ENCODE measurements at regions of chr5 and their contacts with region 1.

Region 1: GRCh38 chr5:172770675-172771438 is at the start of gene DUSP1:
- DNase-seq: peak; percentile 99
- H3K4me3 ChIP-seq: peak within 1 kb of the TSS; percentile 80
- H3K27ac ChIP-seq: peak within 1 kb of the TSS; percentile 100
- H3K4me1 ChIP-seq: peaks cover 26% of the 10 kb centered on the region
- H3K27me3 ChIP-seq: no peaks in the 10 kb centered on the region
- CTCF ChIP-seq: peak; percentile 21
- total RNA-seq, gene DUSP1: 61.7 to 102 TPM

Region 2: GRCh38 chr5:172659909-172660628 is 110.8 kb before region 1 on chr5:
- intact Hi-C with region 1: no loop called
- DNase-seq: peak; percentile 92
- H3K4me3 ChIP-seq: no peak overlapping the region
- H3K27ac ChIP-seq: peak overlapping the region; percentile 72
- H3K4me1 ChIP-seq: peaks cover 21% of the 10 kb centered on the region
- H3K27me3 ChIP-seq: no peaks in the 10 kb centered on the region
- CTCF ChIP-seq: no peak

Region 3: DNA sequence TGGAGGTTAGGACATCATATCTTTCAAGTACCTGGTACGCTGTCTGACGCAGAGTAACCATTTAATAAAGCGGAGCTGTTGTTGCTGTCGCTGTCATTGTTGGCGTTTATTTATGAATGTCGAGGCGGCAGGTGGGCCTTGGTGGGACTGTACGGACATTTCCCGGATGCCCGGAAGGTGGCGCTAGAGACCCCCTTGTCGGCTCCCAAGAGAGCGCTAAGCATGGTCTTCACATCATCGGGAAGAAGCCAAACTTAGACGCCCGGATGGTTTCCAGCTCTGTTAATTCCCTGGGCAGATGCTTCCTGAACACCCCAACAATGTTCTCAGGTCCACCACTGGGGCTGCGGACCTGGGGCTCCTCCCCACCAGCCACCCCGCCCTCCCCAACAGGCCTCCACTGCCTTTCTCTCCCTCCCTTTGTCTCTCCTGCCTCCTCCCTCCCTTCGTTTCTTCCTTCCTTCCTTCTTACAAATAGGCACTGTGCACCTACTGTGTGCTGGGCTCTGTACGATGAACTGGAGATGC is 54.0 kb before region 1 on chr5:
- intact Hi-C with region 1: loop called (anchors 2 kb)
- DNase-seq: peak; percentile 84
- H3K4me3 ChIP-seq: no peak overlapping the region
- H3K27ac ChIP-seq: no peak overlapping the region
- H3K4me1 ChIP-seq: no peaks in the 10 kb centered on the region
- H3K27me3 ChIP-seq: no peaks in the 10 kb centered on the region
- CTCF ChIP-seq: peak; percentile 86

Region 4: DNA sequence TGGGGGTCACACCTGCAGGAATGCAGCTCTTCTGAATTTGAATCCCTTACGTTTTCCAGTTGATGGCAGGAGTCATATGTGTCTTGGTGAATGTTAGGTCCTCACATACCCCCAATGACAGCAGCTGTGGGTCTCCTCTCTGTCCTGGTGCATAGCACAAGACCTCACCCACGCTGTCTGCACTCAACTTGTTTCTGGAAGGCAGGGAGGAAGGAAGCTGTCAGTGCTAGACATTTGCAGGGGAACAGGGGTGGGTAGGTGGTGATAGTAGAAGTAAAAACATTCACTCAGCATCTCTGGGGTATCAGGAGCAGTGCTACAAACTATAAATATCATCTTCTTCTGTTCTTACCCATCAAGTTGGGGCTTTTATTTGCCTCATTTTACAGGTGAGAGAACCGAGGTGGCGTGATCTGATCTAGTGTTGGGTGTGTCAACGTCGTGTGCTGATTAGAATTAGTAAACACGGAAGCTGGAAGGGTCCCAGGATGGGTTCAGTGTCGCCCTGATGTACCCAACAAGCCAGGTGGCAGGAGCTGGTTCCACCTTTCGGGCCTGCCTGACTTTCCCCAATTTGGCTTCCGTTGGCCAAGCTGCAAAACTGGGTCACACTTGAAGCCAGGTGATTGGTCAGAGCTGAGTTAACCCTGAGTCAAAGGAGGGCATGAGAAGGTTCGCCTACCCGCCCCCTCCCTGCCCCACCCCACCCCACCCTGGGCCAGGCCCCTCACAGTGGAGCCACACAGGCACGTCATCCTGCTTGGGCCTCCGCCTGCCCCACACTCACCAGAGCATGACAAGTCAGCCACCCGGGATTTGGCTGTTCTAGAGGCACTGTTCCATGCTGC is 79.0 kb after region 1 on chr5:
- intact Hi-C with region 1: loop called (anchors 5 kb)
- DNase-seq: peak; percentile 86
- H3K4me3 ChIP-seq: no peak overlapping the region
- H3K27ac ChIP-seq: peak overlapping the region; percentile 55
- H3K4me1 ChIP-seq: peaks cover 28% of the 10 kb centered on the region
- H3K27me3 ChIP-seq: no peaks in the 10 kb centered on the region
- CTCF ChIP-seq: no peak

Region 5: GRCh38 chr5:172902497-172903200 is 131.8 kb after region 1 on chr5:
- intact Hi-C with region 1: loop called (anchors 5 kb)
- DNase-seq: peak; percentile 60
- H3K4me3 ChIP-seq: no peak overlapping the region
- H3K27ac ChIP-seq: peak overlapping the region; percentile 95
- H3K4me1 ChIP-seq: peaks cover 19% of the 10 kb centered on the region
- H3K27me3 ChIP-seq: no peaks in the 10 kb centered on the region
- CTCF ChIP-seq: no peak